WTC11 (cell line): ENCODE measurements at regions of chr3 and their contacts with region 1.

Region 1: DNA sequence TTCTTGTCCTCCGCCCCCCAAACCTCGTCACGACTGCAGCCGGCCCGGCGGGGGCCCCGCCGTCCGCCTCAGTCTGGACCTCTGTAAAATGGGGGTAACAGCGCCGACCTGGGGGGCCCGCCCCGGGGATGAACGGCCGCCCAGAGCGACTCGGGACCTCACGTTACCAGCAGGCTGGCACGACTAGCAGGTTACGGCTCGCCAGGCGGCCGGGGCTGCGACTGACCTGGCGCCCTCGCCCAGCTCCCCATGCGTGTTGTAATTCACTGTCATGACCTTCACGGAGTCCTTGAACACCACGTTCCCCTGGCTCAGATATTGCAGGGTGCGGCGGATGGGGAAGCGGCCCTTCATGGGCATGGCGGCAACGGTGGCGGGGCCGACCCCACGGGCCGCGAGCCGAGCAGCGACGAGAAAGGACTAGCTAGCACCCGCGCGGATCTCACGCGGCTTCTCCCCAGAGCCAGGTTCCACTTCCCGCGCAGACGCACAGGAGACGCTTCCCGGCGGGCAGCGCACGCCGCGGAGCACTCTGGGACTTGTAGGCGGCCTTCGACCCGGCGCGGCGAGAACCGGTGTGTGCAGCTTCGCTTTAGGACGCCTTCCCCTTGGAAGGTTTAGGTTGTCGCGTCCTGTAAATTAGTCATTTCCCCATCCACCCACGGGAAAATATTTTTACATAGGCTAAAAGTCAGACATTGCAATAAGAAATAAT is at the start of gene MRPS25:
- DNase-seq: peak; percentile 87
- ATAC-seq: peak; percentile 94
- H3K4me3 Mint-ChIP-seq: peak within 1 kb of the TSS; percentile 95
- H3K27ac Mint-ChIP-seq: peak within 1 kb of the TSS; percentile 97
- H3K4me1 Mint-ChIP-seq: peaks cover 19% of the 10 kb centered on the region
- H3K27me3 Mint-ChIP-seq: peaks cover 2% of the 10 kb centered on the region; the same call in 1 of the 2 replicates
- CTCF ChIP-seq: no peak
- total RNA-seq, gene MRPS25: 69.7 to 72.7 TPM (median 70.1 TPM) in 3 replicates

Region 2: DNA sequence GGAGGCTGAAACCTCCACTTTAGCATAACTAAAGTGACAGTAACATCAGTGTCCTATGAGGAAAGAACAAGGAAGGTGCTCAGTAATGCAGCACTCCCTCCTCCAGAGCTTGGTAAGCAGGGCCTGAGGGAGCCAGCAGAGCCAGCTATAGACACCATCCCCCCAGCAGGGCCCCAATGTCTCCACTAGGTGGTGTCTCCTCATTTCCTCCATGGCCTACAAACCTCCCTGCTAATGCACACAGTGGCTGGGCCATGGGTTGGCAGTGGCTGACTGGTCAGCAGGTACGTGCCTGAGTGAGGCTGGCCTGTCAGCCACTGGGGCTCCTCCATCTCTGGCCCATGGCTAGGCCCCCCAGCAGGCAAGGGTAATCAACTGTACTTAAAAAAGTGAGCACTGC is 13.5 kb before region 1 on chr3:
- CTCF ChIA-PET with region 1: interaction called, 15 read pairs
- POLR2A ChIA-PET with region 1: interaction called, 6 read pairs
- DNase-seq: peak; percentile 77
- ATAC-seq: peak; percentile 97
- H3K4me3 Mint-ChIP-seq: no peak overlapping the region
- H3K27ac Mint-ChIP-seq: 0 out of 2 replicates have a peak overlapping the region, but pooled peaks have one; percentile 62
- H3K4me1 Mint-ChIP-seq: peaks cover 19% of the 10 kb centered on the region
- H3K27me3 Mint-ChIP-seq: no peaks in the 10 kb centered on the region
- CTCF ChIP-seq: peak; percentile 53